Psoas muscle (tissue), 8 donors: ENCODE measurements at regions of chr20 and their contacts with region 1.

Region 1: GRCh38 chr20:12023194-12023795 is 105.6 kb downstream of the BTBD3 start:
- DNase-seq: no peak
- ATAC-seq: no peak
- H3K4me3 ChIP-seq: no peak overlapping the region
- H3K27ac ChIP-seq: no peak overlapping the region
- H3K4me1 ChIP-seq: no peaks in the 10 kb centered on the region
- H3K27me3 ChIP-seq: no peaks in the 10 kb centered on the region
- CTCF ChIP-seq: no peak

Region 2: GRCh38 chr20:11972478-11972877 is 50.8 kb before region 1 on chr20:
- intact Hi-C with region 1: loop called in 1 of 2 experiments (anchors 5 kb)
- DNase-seq: no peak
- ATAC-seq: no peak
- H3K4me3 ChIP-seq: no peak overlapping the region
- H3K27ac ChIP-seq: no peak overlapping the region
- H3K4me1 ChIP-seq: no peaks in the 10 kb centered on the region
- H3K27me3 ChIP-seq: no peaks in the 10 kb centered on the region
- CTCF ChIP-seq: no peak